Activated T-helper 2 cell treated with anti-CD3 and anti-CD28 coated beads, Interferon-gamma antibody, Interleukin-2, Interleukin-4, amounts not matched to agents 10 μg/mL and 5 μg/mL and 100 μg/mL, durations not matched to agents 14 hours and 24 hours and 36 hours (primary cell): ENCODE measurements at regions of chr3 and their contacts with region 1.

Region 1: DNA sequence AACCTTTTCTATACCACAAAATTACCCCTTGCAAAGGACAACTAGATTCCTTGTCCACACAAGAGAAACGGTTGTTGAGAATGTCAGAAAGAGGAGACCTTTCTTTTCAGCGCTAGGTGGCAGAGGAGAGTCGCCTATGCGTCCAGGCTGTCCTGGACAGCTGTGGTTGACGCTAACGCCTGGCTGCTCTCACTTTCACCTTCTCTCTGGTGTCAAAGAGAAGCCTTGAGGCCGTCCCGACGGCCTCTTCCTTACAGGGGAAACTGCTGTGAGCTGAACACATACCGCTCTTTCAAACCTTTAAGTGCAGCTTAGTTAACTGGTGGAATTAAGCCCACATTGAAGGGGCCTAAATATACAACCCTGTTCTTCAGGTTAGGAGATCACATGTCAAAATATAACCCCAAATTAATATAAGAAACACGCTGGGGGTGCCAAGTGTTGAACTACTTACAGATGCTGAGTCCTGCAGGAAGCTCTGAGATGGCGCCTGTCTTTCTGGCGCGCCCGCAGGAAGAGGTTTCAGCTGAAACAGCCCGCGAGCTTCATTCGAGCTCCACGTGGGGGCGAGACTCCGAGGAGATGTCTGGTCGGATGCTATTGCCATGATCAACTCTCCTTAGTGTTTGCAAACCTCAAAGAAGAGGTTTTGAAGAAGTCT is 26.1 kb upstream of the KBTBD8 start:
- DNase-seq: peak; percentile 41
- H3K4me3 Mint-ChIP-seq: peak overlapping the region; percentile 65
- H3K27ac Mint-ChIP-seq: no peak overlapping the region
- H3K4me1 Mint-ChIP-seq: peaks cover 12% of the 10 kb centered on the region
- H3K27me3 Mint-ChIP-seq: peaks cover 11% of the 10 kb centered on the region

Region 2: GRCh38 chr3:66998113-66998903 is 26.3 kb after region 1 on chr3 and contains the start of gene KBTBD8:
- intact Hi-C with region 1: loop called (anchors 1 kb)
- DNase-seq: peak; percentile 98
- H3K4me3 Mint-ChIP-seq: peak within 1 kb of the TSS; percentile 95
- H3K27ac Mint-ChIP-seq: peak within 1 kb of the TSS; percentile 86
- H3K4me1 Mint-ChIP-seq: peaks cover 27% of the 10 kb centered on the region
- H3K27me3 Mint-ChIP-seq: peaks cover 14% of the 10 kb centered on the region
- total RNA-seq, gene KBTBD8: 10.4 and 13.4 TPM in 2 replicates

Region 3: DNA sequence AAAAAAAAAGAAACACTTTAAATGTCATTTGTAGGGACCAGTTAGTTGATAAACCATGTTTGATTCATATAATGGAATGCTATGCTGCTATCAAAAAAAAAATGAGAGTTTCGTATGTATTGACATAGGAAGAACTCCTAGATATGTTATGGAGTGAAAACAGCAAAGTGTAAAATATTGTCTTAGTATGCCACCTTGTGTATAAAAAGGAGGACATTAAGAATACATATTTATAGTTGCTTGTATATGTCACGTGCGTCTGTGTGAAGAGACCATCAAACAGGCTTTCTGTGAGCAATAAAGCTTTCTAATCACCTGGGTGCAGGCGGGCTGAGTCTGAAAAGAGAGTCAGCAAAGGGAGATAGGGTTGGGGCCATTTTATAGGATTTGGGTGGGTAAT is 65.6 kb after region 1 on chr3:
- intact Hi-C with region 1: loop called (anchors 10 kb)
- DNase-seq: no peak
- H3K4me3 Mint-ChIP-seq: no peak overlapping the region
- H3K27ac Mint-ChIP-seq: no peak overlapping the region
- H3K4me1 Mint-ChIP-seq: no peaks in the 10 kb centered on the region
- H3K27me3 Mint-ChIP-seq: peaks cover 8% of the 10 kb centered on the region

Region 4: GRCh38 chr3:67113802-67114407 is 141.9 kb after region 1 on chr3:
- intact Hi-C with region 1: loop called (anchors 5 kb)
- DNase-seq: peak; percentile 68
- H3K4me3 Mint-ChIP-seq: no peak overlapping the region
- H3K27ac Mint-ChIP-seq: no peak overlapping the region
- H3K4me1 Mint-ChIP-seq: peaks cover 5% of the 10 kb centered on the region
- H3K27me3 Mint-ChIP-seq: peaks cover 2% of the 10 kb centered on the region

Region 5: DNA sequence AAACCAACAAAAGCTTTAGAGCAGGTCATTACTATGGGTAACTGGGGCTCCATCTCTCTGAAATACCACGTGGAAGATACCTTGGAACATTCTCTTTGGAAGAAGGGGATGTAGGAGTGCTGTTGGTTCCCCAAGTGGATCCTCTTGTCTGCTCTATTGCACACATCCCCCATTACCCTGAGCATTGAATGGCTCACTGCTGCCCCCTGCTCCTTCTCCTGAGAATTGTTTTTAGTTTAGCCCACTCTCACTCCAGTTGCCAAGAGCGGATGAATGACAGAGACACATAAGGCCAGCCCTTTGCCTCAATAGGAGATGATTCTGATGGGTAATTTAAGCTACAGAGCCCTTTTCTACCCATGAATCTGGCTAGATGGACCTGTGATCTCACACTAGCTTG is 818.0 kb after region 1 on chr3:
- intact Hi-C with region 1: loop called (anchors 5 kb)
- DNase-seq: peak; percentile 23
- H3K4me3 Mint-ChIP-seq: no peak overlapping the region
- H3K27ac Mint-ChIP-seq: no peak overlapping the region
- H3K4me1 Mint-ChIP-seq: peaks cover 2% of the 10 kb centered on the region
- H3K27me3 Mint-ChIP-seq: peaks cover 8% of the 10 kb centered on the region